T-cell (primary cell): ENCODE measurements at regions of chr16 and their contacts with region 1.

Region 1: GRCh38 chr16:71610936-71611871 is 14.8 kb upstream of the MARVELD3 start:
- DNase-seq: peak; percentile 38 to 84 (median 68)
- ATAC-seq: peak; percentile 83 to 99 (median 90)
- H3K4me3 ChIP-seq: no peak overlapping the region
- H3K4me3 Mint-ChIP-seq: no peak overlapping the region
- H3K27ac ChIP-seq: no peak overlapping the region
- H3K27ac Mint-ChIP-seq: no peak overlapping the region
- H3K4me1 ChIP-seq: peaks cover 0 to 5% of the 10 kb centered on the region in 2 experiments
- H3K4me1 Mint-ChIP-seq: peaks cover 0 to 5% (median 3%) of the 10 kb centered on the region in 3 donors
- H3K27me3 ChIP-seq: peaks cover 0 to 23% of the 10 kb centered on the region in 2 experiments
- H3K27me3 Mint-ChIP-seq: peaks cover 22 to 32% of the 10 kb centered on the region in 2 donors

Region 2: DNA sequence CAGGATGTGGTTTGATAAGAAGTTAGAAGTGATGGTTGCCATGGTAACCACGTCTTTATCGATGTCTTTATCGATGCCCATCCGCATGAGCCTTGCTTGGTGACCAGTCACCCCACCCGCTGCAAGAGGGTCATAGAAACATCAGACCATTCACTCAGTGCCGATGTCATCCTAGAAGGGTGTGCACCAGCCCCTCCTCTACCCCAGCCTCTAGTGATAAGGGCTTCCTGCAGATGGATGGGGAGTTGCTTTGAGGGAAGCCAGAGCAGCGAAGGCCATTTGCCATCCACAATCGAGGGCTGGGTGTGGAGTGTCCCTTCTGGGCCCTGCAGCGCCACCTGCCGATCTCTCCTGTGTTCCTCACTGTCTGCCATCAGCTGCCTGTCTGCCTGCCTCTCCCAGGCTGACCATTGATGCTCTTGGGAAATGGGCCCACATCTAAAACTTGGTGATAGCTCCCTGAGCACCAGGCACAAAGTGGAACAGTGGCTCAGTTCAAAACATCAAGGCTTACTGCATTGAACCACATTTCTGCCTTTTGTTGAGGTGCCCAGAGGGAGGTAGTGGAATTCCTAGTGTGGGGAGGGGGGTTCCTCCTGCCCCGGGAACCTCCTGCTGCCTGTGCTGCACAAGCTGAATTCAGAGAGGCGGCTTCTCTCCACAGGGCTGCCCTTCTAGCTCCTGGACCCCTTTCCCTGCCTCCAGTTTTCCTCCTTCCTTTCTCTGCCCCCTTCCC is 243.8 kb before region 1 on chr16:
- CTCF ChIA-PET with region 1: no interaction called
- POLR2A ChIA-PET with region 1: no interaction called
- DNase-seq: peak in 7 of 35 experiments; percentile 4 to 17 (median 6)
- ATAC-seq: peak in 1 of 4 experiments; percentile 29
- H3K4me3 ChIP-seq: no peak overlapping the region
- H3K4me3 Mint-ChIP-seq: no peak overlapping the region
- H3K27ac ChIP-seq: no peak overlapping the region
- H3K27ac Mint-ChIP-seq: no peak overlapping the region
- H3K4me1 ChIP-seq: no peaks in the 10 kb centered on the region
- H3K4me1 Mint-ChIP-seq: no peaks in the 10 kb centered on the region
- H3K27me3 ChIP-seq: peaks cover 0 to 35% of the 10 kb centered on the region in 2 experiments
- H3K27me3 Mint-ChIP-seq: peaks cover 26 to 29% of the 10 kb centered on the region in 2 donors

Region 3: GRCh38 chr16:71412270-71413160 is 198.7 kb before region 1 on chr16:
- CTCF ChIA-PET with region 1: interaction called, 15 to 17 read pairs
- POLR2A ChIA-PET with region 1: no interaction called
- DNase-seq: peak in 34 of 35 experiments; percentile 16 to 82 (median 53)
- ATAC-seq: peak; percentile 62 to 78 (median 69)
- H3K4me3 ChIP-seq: no peak overlapping the region
- H3K4me3 Mint-ChIP-seq: no peak overlapping the region
- H3K27ac ChIP-seq: no peak overlapping the region
- H3K27ac Mint-ChIP-seq: no peak overlapping the region
- H3K4me1 ChIP-seq: peaks cover 0 to 8% of the 10 kb centered on the region in 2 experiments
- H3K4me1 Mint-ChIP-seq: peaks cover 7 to 17% (median 10%) of the 10 kb centered on the region in 3 donors
- H3K27me3 ChIP-seq: peaks cover 0 to 46% of the 10 kb centered on the region in 2 experiments
- H3K27me3 Mint-ChIP-seq: peaks cover 39 to 47% of the 10 kb centered on the region in 2 donors

Region 4: DNA sequence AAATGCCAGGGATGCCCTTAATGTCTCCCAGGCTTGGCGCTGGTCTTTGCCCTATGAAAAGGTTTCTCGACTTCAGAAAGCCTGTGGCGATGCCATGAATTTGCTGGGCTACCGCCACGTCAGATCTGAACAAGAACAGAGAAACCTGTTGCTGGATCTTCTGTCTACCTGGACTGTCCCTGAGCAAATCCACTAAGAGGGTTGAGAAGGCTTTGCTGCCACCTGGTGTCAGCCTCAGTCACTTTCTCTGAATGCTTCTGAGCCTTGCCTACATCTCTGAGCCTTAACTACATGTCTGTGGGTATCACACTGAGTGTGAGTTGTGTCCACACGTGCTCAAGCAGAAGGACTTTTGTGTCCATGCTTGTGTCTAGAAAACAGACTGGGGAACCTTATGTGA is 73.6 kb before region 1 on chr16:
- CTCF ChIA-PET with region 1: interaction called, 3 to 10 read pairs
- POLR2A ChIA-PET with region 1: no interaction called
- DNase-seq: peak in 22 of 35 experiments; percentile 1 to 48 (median 10)
- ATAC-seq: peak in 3 of 4 experiments; percentile 49 to 56 (median 51)
- H3K4me3 ChIP-seq: no peak overlapping the region
- H3K4me3 Mint-ChIP-seq: no peak overlapping the region
- H3K27ac ChIP-seq: no peak overlapping the region
- H3K27ac Mint-ChIP-seq: no peak overlapping the region
- H3K4me1 ChIP-seq: peaks cover 0 to 3% of the 10 kb centered on the region in 2 experiments
- H3K4me1 Mint-ChIP-seq: peaks cover 3 to 6% (median 4%) of the 10 kb centered on the region in 3 donors
- H3K27me3 ChIP-seq: peaks cover 0 to 5% of the 10 kb centered on the region in 2 experiments
- H3K27me3 Mint-ChIP-seq: peaks cover 8% of the 10 kb centered on the region in 2 donors

Region 5: GRCh38 chr16:71564155-71564967 is 46.8 kb before region 1 on chr16:
- CTCF ChIA-PET with region 1: interaction called, 18 to 42 read pairs
- POLR2A ChIA-PET with region 1: no interaction called
- DNase-seq: peak in 1 of 35 experiments; percentile 1
- ATAC-seq: no peak
- H3K4me3 ChIP-seq: peak overlapping the region; percentile 68 to 79
- H3K4me3 Mint-ChIP-seq: peak overlapping the region; percentile 84 to 94 (median 94)
- H3K27ac ChIP-seq: peak overlapping the region; percentile 72
- H3K27ac Mint-ChIP-seq: peak overlapping the region; percentile 96 to 97
- H3K4me1 ChIP-seq: peaks cover 9 to 13% of the 10 kb centered on the region in 2 experiments
- H3K4me1 Mint-ChIP-seq: peaks cover 16 to 21% (median 18%) of the 10 kb centered on the region in 3 donors
- H3K27me3 ChIP-seq: peaks cover 0 to under 1% of the 10 kb centered on the region in 2 experiments
- H3K27me3 Mint-ChIP-seq: no peaks in the 10 kb centered on the region

Region 6: DNA sequence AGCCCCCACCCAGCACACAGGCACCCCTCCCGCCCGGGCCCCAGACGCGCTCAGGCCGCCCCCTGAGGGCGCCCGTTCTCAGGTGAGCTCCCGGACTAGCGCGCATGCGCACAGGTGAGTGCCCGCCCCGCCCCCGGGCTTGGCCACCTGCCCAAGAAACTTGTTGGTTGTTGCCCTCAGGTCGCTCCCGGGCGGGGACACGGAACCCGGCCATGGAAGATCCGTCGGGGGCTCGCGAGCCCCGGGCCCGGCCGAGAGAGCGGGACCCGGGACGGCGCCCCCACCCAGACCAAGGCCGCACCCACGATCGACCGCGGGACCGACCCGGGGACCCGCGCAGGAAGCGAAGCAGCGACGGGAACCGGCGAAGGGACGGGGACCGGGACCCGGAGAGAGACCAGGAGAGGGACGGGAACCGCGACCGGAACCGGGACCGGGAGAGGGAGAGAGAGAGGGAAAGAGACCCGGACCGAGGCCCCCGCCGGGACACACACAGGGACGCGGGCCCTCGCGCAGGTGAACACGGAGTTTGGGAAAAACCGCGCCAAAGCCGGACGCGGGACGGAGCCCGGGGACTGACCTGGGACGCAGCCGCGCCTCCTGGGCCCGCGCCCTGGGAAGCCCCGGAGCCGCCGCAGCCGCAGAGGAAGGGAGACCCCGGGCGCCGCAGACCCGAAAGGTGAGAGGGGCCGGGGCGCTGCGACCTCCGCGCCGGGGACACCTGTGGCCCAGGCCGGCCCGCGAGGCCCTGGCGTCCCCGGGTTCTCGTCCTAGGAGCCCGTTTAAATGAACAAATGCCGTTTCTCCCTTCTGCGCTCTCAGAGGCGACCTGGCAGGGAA is 15.0 kb after region 1 on chr16 and contains the start of gene MARVELD3:
- CTCF ChIA-PET with region 1: interaction called in 1 of 2 experiments, 10 read pairs
- POLR2A ChIA-PET with region 1: no interaction called
- DNase-seq: peak in 22 of 35 experiments; percentile 7 to 42 (median 21)
- ATAC-seq: peak; percentile 13 to 26 (median 20)
- H3K4me3 ChIP-seq: peak within 1 kb of the TSS; percentile 45 to 50
- H3K4me3 Mint-ChIP-seq: peak within 1 kb of the TSS in 2 of 3 donors; percentile 28 to 47
- H3K27ac ChIP-seq: no peak within 1 kb of the TSS
- H3K27ac Mint-ChIP-seq: no peak within 1 kb of the TSS
- H3K4me1 ChIP-seq: peaks cover 0 to 12% of the 10 kb centered on the region in 2 experiments
- H3K4me1 Mint-ChIP-seq: peaks cover 0 to 17% (median 10%) of the 10 kb centered on the region in 3 donors
- H3K27me3 ChIP-seq: peaks cover 9 to 38% of the 10 kb centered on the region in 2 experiments
- H3K27me3 Mint-ChIP-seq: peaks cover 6 to 17% of the 10 kb centered on the region in 2 donors
- total RNA-seq, gene MARVELD3: 0.22 TPM in 1 of 5 donors, not detected in the others

Region 7: DNA sequence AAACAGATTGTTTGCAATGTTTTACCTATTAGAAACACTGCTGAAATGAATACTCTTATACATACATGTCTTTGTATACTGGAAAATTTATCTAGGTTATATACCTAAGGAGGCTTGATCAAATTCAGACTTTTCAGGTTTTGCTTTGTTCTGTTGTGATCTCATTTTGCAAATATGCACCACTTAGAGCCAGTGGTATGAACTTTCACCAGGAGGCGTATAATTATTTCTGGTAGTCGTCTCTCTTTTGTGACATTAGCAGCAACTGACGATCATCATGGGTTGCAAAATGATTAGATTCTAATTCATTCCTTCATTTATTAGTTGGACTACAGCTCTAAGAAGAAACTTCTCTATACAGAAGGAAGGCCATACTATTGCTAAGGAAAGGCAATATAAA is 170.5 kb after region 1 on chr16:
- CTCF ChIA-PET with region 1: no interaction called
- POLR2A ChIA-PET with region 1: no interaction called
- DNase-seq: no peak
- ATAC-seq: no peak
- H3K4me3 ChIP-seq: no peak overlapping the region
- H3K4me3 Mint-ChIP-seq: no peak overlapping the region
- H3K27ac ChIP-seq: no peak overlapping the region
- H3K27ac Mint-ChIP-seq: no peak overlapping the region
- H3K4me1 ChIP-seq: peaks cover 0 to 13% of the 10 kb centered on the region in 2 experiments
- H3K4me1 Mint-ChIP-seq: peaks cover 35 to 44% (median 41%) of the 10 kb centered on the region in 3 donors
- H3K27me3 ChIP-seq: no peaks in the 10 kb centered on the region
- H3K27me3 Mint-ChIP-seq: no peaks in the 10 kb centered on the region

Region 8: GRCh38 chr16:72050769-72051464 is 439.7 kb after region 1 on chr16:
- CTCF ChIA-PET with region 1: no interaction called
- POLR2A ChIA-PET with region 1: no interaction called
- DNase-seq: no peak
- ATAC-seq: no peak
- H3K4me3 ChIP-seq: no peak overlapping the region
- H3K4me3 Mint-ChIP-seq: no peak overlapping the region
- H3K27ac ChIP-seq: no peak overlapping the region
- H3K27ac Mint-ChIP-seq: no peak overlapping the region
- H3K4me1 ChIP-seq: no peaks in the 10 kb centered on the region
- H3K4me1 Mint-ChIP-seq: no peaks in the 10 kb centered on the region
- H3K27me3 ChIP-seq: no peaks in the 10 kb centered on the region
- H3K27me3 Mint-ChIP-seq: no peaks in the 10 kb centered on the region